CD4-positive, alpha-beta T cell (primary cell): ENCODE measurements at regions of chr22 and their contacts with region 1.

Region 1: DNA sequence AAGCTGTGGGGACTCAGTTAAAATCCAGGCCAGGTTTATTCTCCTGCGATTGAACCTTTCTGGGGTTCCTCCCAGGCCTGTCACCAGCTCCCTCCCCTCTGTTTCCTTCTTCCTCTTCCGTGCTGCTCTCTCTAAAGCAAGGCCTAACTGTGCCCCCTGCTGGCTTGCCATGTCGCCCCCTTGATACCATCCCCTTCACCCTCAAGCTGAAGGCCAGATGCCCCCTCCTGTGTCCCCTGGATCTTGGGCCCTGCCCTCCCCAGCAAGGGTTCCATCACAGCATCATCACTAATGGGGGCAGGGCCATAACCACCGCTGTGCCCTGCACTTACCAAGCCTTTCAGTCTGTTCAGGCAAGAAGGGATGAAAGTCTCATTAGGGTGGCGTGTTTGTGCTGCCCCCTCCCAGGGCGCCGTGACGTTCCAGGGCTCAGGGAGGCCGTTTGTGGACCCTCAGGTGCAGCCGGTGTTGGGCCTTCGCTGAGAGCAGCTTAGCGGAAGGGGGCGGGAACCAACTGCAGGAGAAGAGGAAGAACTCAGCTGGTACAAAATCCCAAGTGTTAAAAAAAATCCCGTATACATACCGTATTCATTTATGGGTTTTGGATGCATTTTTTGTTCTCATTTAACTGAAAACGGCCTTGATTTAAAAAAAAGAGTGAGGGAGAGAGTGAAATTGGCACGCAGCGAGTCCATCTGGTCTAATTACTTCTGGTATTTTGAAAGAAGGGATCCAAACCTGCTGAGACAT is 69.9 kb downstream of the MPPED1 start:
- DNase-seq: peak in 6 of 14 experiments; percentile 1 to 54 (median 26)
- ATAC-seq: peak; percentile 37
- H3K4me3 ChIP-seq: peak overlapping the region; percentile 47
- H3K4me3 Mint-ChIP-seq: peak overlapping the region; percentile 82
- H3K27ac ChIP-seq: no peak overlapping the region
- H3K27ac Mint-ChIP-seq: peak overlapping the region; percentile 72
- H3K4me1 ChIP-seq: peaks cover 11% of the 10 kb centered on the region
- H3K4me1 Mint-ChIP-seq: peaks cover 16% of the 10 kb centered on the region
- H3K27me3 ChIP-seq: no peaks in the 10 kb centered on the region
- H3K27me3 Mint-ChIP-seq: no peaks in the 10 kb centered on the region
- CTCF ChIP-seq: no peak

Region 2: GRCh38 chr22:43385770-43386641 is 95.7 kb before region 1 on chr22:
- CTCF ChIA-PET with region 1: no interaction called
- POLR2A ChIA-PET with region 1: no interaction called
- intact Hi-C with region 1: loop called in 1 of 2 experiments (anchors 1 kb)
- DNase-seq: peak; percentile 50 to 85 (median 63)
- ATAC-seq: peak; percentile 92
- H3K4me3 ChIP-seq: no peak overlapping the region
- H3K4me3 Mint-ChIP-seq: no peak overlapping the region
- H3K27ac ChIP-seq: no peak overlapping the region
- H3K27ac Mint-ChIP-seq: no peak overlapping the region
- H3K4me1 ChIP-seq: peaks cover 26% of the 10 kb centered on the region
- H3K4me1 Mint-ChIP-seq: peaks cover 4% of the 10 kb centered on the region
- H3K27me3 ChIP-seq: peaks cover 13 to 14% of the 10 kb centered on the region in 2 experiments
- H3K27me3 Mint-ChIP-seq: peaks cover 30% of the 10 kb centered on the region
- CTCF ChIP-seq: peak; percentile 85

Region 3: GRCh38 chr22:43561415-43562178 is 79.9 kb after region 1 on chr22:
- CTCF ChIA-PET with region 1: no interaction called
- POLR2A ChIA-PET with region 1: no interaction called
- intact Hi-C with region 1: no loop called
- DNase-seq: no peak
- ATAC-seq: no peak
- H3K4me3 ChIP-seq: no peak overlapping the region
- H3K4me3 Mint-ChIP-seq: no peak overlapping the region
- H3K27ac ChIP-seq: no peak overlapping the region
- H3K27ac Mint-ChIP-seq: no peak overlapping the region
- H3K4me1 ChIP-seq: no peaks in the 10 kb centered on the region
- H3K4me1 Mint-ChIP-seq: no peaks in the 10 kb centered on the region
- H3K27me3 ChIP-seq: peaks cover 0 to 3% of the 10 kb centered on the region in 2 experiments
- H3K27me3 Mint-ChIP-seq: peaks cover 4% of the 10 kb centered on the region
- CTCF ChIP-seq: no peak